ENCODE measurements at regions of chr16 and their contacts with region 1.

Region 1: DNA sequence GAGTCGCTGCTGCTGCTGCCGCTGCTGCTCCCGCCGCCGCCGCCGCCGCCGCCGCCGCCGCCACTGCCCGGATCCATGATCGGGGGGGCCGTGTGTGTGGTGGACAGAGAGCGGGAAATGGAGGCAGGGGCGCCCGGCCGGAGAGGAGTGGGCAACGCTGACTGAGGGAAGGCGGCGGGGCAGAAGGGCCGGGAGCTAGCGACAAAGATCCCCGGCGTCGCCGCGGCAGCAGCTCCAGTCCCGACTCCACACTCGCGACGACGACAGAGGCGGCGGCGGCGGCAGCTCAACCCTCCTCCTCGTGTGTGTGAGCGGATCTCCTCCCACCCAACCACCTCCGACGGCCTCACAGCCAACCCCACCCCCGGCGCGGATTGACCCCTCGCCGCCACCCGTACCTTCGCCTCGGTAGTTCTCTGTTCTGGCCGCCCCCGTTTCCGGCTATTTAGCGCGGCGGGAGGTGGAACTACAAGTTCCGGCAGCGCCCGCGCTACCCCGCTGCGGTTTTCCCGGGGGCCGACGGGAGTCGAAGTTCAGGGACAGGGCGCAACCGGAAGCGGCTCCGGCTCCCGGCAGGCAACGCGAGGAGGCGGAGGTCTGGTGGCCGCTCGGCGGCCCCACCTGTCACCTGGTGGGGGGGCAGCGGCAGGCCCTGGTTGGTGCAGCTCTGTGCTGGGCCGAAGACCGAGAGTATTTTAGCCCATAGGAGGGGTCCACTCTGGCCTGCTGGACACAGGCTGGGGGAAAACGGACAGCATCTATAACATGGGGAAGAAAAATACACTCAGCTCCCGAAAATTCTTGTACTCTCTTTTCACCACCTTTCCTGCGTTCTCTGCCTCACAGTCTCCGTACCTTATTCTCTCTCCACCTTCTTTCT is at the start of gene GSPT1:
- DNase-seq: peak; percentile 95 to 99 (median 98)
- H3K4me3 ChIP-seq: peak within 1 kb of the TSS; percentile 63 to 97 (median 83)
- H3K27ac ChIP-seq: peak within 1 kb of the TSS; percentile 69 to 97 (median 90)
- H3K27me3 ChIP-seq: no peaks in the 10 kb centered on the region
- CTCF ChIP-seq: peak in 39 of 56 donors; percentile 7 to 50 (median 30)
- total RNA-seq, gene GSPT1: 60.6 to 112 (median 78.0) TPM

Region 2: DNA sequence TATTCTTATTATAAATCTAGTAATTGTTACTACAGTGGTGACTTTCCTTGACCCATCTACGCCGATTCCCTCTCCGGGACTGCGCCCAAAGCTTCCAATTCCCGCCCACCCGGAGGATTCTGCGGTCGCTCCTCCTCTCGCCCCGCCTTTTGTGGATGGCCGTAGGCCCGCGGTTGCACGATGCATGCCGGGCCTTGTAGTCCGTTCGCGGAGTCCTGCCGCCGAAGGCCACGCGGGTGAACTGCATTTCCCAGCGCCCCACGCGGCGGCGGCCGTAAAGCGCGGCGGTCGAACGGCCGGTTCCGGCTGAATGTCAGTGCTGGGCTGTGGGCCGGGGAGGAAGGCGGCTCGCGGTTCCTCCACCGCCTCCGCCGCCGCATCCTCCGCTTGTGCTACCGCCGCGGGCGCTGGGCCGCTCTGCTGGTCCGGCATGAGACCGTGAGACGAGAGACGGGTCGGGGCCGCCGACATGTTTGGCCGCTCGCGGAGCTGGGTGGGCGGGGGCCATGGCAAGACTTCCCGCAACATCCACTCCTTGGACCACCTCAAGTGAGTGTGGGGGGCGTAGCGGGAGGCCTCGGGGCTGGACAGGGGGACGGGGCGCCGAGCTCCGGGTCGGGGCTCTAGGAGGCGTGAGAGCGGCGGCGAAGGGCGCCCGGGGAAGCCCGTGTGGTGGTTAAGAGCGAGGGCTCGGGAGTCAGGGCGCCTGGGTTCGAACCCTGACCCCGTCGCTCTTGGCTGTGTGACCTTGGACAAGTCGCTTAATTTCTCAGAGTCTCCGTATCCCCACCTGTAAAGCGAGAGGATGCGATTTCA is 971.4 kb before region 1 on chr16 and contains the start of gene CLEC16A:
- intact Hi-C with region 1: loop called in 1 of 2 experiments (anchors 5 kb)
- DNase-seq: peak; percentile 97 to 99 (median 98)
- H3K4me3 ChIP-seq: peak within 1 kb of the TSS; percentile 63 to 100 (median 91)
- H3K27ac ChIP-seq: peak within 1 kb of the TSS in 49 of 59 donors; percentile 18 to 90 (median 70)
- H3K27me3 ChIP-seq: no peaks in the 10 kb centered on the region
- CTCF ChIP-seq: peak in 54 of 56 donors; percentile 15 to 72 (median 51)
- total RNA-seq, gene CLEC16A: 40.5 to 75.1 (median 58.1) TPM

Region 3: DNA sequence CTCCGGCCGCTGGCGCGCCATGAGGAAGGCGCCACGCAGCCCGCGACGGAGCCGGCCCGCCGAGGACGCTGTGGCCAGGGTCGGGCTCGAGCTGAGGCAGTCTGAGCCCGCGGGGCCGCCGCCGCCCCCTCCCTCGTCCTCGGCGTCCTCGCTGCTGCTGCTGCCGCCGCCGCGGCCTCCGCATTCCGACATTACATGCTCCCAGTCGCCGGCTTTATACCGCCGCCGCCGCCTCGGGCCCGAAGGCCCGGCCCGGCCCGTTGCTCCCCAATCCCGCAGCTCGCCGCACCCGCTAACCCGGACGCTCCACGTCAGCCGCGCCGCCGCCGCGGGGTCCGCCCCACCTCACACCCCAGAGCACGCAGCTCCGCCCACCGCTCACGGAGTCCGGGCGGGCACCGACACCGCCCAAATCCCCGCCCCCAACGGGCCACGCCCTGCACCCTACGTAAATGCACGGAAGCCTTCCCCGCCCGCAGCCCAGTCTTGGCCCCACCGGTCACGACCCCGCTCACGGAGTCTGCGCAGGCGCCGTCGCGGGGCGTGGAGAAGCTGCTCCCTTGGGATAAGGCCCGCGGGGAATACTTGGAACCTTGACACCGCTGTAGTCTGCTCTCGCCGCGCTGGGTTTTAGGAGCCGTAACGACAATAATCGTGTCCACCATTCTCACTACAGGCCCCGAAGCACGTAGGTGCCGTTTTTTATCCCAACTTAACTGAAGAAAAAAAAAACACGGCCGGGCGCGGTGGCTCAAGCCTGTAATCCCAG is 173.2 kb before region 1 on chr16 and contains the start of gene TXNDC11:
- intact Hi-C with region 1: loop called in 1 of 2 experiments (anchors 5 kb)
- DNase-seq: peak; percentile 98 to 100 (median 98)
- H3K4me3 ChIP-seq: peak within 1 kb of the TSS; percentile 62 to 98 (median 92)
- H3K27ac ChIP-seq: peak within 1 kb of the TSS; percentile 35 to 97 (median 93)
- H3K27me3 ChIP-seq: no peaks in the 10 kb centered on the region
- CTCF ChIP-seq: peak in 22 of 56 donors; percentile 6 to 53 (median 24)
- total RNA-seq, gene TXNDC11: 16.0 to 38.5 (median 26.0) TPM

Region 4: GRCh38 chr16:11797166-11797956 is 118.5 kb before region 1 on chr16 and contains the start of gene ZC3H7A:
- intact Hi-C with region 1: loop called in 1 of 2 experiments (anchors 10 kb)
- DNase-seq: peak; percentile 88 to 98 (median 96)
- H3K4me3 ChIP-seq: peak within 1 kb of the TSS; percentile 55 to 98 (median 92)
- H3K27ac ChIP-seq: peak within 1 kb of the TSS; percentile 78 to 99 (median 94)
- H3K27me3 ChIP-seq: no peaks in the 10 kb centered on the region
- CTCF ChIP-seq: peak; percentile 50 to 94 (median 74)
- total RNA-seq, gene ZC3H7A: 40.0 to 83.3 (median 56.8) TPM

Region 5: GRCh38 chr16:11816103-11816502 is 99.8 kb before region 1 on chr16:
- intact Hi-C with region 1: no loop called
- DNase-seq: no peak
- H3K4me3 ChIP-seq: no peak overlapping the region
- H3K27ac ChIP-seq: no peak overlapping the region
- H3K27me3 ChIP-seq: no peaks in the 10 kb centered on the region
- CTCF ChIP-seq: no peak

Region 6: DNA sequence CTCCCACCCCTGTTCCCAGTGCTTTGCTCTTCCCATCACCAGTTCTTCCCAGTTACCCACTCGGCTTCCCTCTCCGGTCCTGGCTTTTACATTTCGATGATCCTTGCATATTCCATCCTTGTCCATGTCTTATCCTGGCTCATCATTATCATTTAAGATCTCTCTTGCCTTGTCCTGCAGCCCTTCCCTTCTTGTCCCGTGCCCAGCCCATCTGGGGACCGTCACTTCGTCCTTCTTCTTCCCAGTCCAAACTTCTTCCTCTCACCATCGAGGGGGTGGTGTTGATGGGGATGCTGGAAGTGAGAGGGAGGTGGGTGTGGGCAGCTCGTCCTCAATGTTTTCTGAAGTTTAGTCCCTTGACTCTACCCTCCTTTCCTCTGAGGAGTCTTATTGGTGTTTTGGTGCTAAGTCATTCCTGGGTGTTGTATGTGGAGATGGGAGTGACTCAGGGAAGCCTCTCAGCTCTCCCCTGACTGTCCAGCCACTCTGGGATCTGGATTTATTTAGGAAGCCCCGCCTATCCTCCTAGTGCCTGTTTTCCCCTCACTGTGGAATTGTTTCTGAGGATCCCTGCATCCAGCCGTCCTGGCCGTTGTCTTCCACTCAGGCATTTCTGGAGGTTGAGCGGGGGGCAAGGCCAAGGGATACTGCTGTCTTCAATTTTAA is 61.6 kb after region 1 on chr16:
- intact Hi-C with region 1: loop called (anchors 2 to 5 kb)
- DNase-seq: peak in 4 of 10 donors; percentile 11 to 55 (median 33)
- H3K4me3 ChIP-seq: peak overlapping the region; percentile 67 to 100 (median 95)
- H3K27ac ChIP-seq: peak overlapping the region in 45 of 59 donors; percentile 4 to 94 (median 82)
- H3K27me3 ChIP-seq: no peaks in the 10 kb centered on the region
- CTCF ChIP-seq: no peak

Region 7: DNA sequence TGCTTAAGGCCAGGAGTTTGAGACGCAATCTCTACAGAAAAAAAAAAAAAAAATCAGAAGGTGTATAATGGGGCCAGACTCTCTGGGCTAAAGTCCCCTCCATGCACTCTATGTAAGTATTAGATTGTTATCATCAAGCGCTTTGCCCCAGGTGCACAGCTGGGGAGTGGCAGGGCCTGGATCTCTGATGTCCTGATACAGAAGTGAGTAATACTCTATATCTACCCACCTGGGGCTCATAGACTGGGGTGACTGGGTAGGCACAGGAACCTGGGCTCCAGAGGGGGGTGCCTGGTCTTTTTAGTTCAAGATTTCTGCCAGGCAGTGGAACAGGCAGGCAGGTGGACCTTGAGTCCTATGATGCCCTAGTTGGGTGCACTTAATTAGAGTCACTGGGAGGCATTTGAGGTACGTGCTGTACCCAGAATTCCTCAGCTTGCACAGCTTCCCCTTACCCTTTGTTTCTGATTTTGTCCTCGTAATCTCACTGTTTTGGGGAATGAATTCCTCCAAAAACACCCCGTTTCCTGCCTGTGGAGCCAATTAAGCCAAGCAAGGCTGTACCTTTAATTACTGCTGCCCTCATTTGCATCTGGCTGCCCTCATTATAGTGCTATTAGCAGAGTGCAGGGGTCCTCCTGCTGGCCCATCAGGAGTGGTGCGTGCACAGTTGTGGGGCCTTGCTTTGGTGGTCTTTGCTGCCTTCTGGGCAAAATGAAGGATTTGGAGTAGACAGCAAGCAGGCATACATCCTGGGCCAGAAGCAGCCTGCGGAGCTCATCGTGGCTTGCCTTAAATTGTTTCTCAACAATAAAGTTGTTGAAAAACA is 299.6 kb after region 1 on chr16:
- intact Hi-C with region 1: no loop called
- DNase-seq: no peak
- H3K4me3 ChIP-seq: no peak overlapping the region
- H3K27ac ChIP-seq: no peak overlapping the region
- H3K27me3 ChIP-seq: no peaks in the 10 kb centered on the region
- CTCF ChIP-seq: peak in 2 of 56 donors; percentile 14 to 31